Dendritic cell treated with granulocyte-macrophage colony-stimulating factor and Interleukin-4, amounts not matched to agents 40 ng/mL and 50 ng/mL, for 4 days (primary cell): ENCODE measurements at regions of chr22 and their contacts with region 1.

Region 1: GRCh38 chr22:29524440-29525191 is 28.9 kb downstream of the THOC5 start:
- H3K4me3 Mint-ChIP-seq: no peak overlapping the region
- H3K27ac Mint-ChIP-seq: no peak overlapping the region
- H3K4me1 Mint-ChIP-seq: no peaks in the 10 kb centered on the region
- H3K27me3 Mint-ChIP-seq: no peaks in the 10 kb centered on the region

Region 2: DNA sequence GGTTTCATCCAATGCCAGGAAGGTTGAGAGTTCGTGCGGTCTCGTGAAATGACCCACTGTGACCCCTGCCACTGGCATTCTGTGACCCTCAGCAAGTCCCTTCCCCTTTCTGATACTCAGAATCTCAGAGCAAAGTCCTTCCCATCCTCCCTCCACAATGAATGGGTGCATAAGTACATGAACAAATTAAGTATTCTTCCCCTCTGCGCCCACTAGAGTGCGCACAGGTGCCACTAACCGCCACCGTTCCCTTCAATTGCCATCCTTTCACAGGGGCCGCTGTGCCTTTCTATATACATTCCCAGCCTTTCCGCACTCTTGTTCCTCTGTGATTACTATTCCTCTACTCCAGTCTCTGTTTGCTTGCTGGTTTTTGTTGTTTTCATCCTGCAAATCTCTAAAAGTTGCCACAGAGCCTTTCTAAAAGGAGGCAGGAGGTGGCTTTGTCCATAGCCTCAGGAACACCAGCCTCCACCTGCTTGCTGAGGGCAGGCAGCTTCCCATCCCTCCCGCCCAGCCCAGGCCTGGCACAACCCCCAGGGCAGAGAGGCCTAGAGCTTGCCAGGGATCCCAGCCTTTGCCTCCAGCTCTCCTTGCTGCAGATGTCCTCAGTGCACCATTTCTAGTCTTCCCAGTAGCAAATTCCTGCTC is 129.6 kb before region 1 on chr22:
- intact Hi-C with region 1: loop called (anchors 2 kb)
- H3K4me3 Mint-ChIP-seq: no peak overlapping the region
- H3K27ac Mint-ChIP-seq: peak overlapping the region; percentile 70
- H3K4me1 Mint-ChIP-seq: peaks cover 46% of the 10 kb centered on the region
- H3K27me3 Mint-ChIP-seq: peaks cover 4% of the 10 kb centered on the region

Region 3: DNA sequence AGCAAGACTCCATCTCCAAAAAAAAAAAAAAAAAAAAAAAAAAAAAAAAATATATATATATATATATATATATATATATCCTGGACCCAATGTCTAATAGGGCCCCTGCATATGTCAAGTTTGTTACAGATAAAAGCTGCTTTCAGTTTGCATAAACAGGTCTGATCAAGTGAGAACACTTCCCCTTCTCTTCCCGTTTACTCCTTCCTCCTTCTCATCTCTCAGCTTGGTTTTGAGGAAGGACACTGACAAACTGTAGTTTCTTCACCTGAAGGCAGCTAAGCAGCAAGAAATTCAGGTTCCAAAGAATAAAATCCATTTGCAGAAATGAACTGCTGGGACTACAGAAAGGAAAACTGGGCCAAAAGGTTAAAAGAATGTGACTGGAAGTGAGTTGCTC is 17.2 kb after region 1 on chr22:
- intact Hi-C with region 1: no loop called
- H3K4me3 Mint-ChIP-seq: no peak overlapping the region
- H3K27ac Mint-ChIP-seq: no peak overlapping the region
- H3K4me1 Mint-ChIP-seq: peaks cover 5% of the 10 kb centered on the region
- H3K27me3 Mint-ChIP-seq: no peaks in the 10 kb centered on the region

Region 4: GRCh38 chr22:29727131-29727523 is 202.5 kb after region 1 on chr22:
- intact Hi-C with region 1: no loop called
- H3K4me3 Mint-ChIP-seq: no peak overlapping the region
- H3K27ac Mint-ChIP-seq: no peak overlapping the region
- H3K4me1 Mint-ChIP-seq: no peaks in the 10 kb centered on the region
- H3K27me3 Mint-ChIP-seq: peaks cover 29% of the 10 kb centered on the region